G401 (cell line): ENCODE measurements at regions of chr2 and their contacts with region 1.

Region 1: GRCh38 chr2:149715005-149715592 is 127.5 kb upstream of the MMADHC start:
- DNase-seq: peak; percentile 63

Region 2: DNA sequence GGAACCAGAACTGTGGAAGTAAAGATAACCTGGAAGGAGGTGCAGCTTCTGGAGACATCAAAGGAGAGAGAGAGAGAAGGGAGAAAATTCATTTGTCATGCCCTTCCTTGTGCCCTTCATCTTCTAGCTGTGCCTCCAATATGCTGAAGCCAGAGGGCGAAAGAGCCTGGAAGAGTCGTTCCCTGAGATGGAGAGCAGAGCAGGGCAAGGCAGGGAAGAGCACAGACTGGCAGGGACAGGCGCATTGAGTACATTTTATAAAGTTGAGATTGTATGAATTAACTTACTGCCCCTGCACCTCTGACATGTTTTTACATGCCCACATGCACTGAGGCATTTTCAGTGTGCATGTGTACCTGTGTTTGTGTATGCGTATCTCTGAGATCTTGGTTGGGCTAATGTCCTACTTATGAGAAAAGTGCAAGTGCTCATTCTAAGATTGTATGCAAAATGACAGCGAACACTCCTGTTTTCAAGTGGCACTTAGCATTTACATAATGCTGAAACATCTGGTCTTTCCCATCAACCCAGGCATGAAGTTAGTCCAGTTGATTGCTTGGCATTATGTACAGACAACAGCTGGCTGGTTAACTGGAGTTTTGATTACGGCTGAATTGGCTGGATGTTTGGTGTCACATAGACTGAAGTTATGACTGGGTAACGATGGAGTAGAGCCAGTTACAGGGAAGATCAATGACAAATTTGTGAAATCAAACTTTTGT is 103.8 kb before region 1 on chr2:
- in situ Hi-C with region 1: loop called (anchors 25 kb)
- DNase-seq: no peak